ENCODE measurements at regions of chr1 and their contacts with region 1.

Region 1: DNA sequence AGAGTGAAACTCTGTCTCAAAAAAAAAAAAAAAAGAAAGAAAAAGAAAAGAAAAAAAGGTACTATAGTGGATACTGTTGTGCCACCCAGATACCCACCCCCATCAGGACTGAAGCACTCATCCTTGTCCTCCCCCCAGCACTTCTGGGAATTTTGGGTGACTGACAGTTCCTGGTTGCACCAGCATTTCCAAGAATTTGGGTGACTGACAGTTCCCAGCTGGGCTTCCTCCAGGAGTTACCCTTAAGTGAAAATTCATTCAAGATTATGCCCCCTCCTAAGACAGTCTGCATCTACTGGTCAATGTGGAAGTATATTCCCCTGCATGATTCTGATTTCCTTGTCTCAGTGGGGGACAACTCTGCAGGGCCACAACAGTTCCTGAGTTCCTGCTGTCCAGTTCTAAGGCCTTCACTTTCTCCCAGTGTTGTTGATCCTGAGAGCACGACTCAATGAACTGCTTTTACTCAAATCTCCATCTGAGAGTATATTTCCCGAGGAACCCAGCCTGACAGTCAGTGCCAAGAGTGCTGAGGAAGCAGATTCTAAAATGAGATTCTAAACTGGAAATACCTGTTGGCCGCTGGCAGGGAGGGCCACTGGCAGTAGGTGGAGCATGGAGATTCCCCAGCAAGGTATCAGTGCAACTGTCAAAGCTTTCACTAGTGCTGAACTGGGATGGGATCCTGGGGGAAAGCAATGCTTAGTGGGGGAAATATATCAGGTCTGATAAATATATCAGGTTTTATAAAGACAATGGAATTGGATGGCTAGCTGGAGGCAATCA is 18.5 kb downstream of the RIIAD1 start:
- DNase-seq: no peak
- ATAC-seq: no peak; the same call in 1 of the 2 replicates
- H3K4me3 ChIP-seq: no peak overlapping the region
- H3K27ac ChIP-seq: no peak overlapping the region
- H3K4me1 ChIP-seq: peaks cover 6 to 10% of the 10 kb centered on the region in 2 experiments; a peak in 2 of 4 replicates
- H3K27me3 ChIP-seq: no peaks in the 10 kb centered on the region
- CTCF ChIP-seq: no peak
- POLR2A ChIP-seq: no peak
- RAD21 ChIP-seq: peak; percentile 23; the same call in 1 of the 2 replicates

Region 2: DNA sequence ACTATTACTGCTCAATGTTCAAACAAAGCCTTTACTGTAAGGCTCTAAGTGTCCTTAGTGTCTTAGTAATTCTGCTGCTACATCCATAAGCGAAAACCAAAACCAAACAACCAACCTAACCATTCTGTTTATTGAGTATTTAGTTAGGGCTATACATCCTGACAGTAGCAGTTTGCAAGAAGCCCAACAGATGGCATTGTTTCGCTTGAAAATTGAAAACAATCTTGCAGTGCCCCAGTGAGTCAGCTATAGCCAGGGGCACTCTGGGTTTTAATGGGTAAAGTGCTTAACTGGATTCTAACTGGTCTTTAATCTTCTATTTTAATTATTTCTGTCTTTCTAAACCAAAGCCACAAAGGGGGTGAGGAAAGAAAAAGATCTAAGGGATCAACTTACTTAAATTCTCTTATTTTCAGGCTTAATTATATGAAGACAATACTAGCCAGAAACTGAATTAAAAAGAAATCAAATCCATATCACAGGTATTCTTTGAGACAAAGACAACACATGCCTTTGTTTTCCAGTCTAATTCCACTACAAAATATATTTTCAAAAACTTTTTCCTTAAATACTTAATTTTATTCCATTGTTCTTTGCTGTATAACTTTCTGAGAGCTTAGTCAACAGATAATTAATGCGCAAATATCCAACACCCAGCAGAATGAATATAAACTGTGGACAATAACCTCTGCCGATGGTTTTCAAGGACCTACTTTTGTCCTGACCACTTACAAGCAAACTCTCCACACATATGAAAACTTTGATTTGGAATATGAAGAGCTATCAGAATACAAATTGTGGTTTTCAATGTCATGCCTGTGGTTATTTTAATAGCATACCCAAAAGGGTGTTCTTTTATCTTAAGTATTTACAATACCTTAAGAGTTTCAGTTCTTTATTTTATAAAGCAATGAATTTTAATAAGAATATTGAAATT is 295.7 kb before region 1 on chr1:
- CTCF ChIA-PET with region 1: interaction called, 4 read pairs
- POLR2A ChIA-PET with region 1: no interaction called
- RAD21 ChIA-PET with region 1: interaction called in 1 of 2 experiments, 5 read pairs
- intact Hi-C with region 1: loop called (anchors 1 kb)
- DNase-seq: peak; percentile 76
- ATAC-seq: peak; percentile 99
- H3K4me3 ChIP-seq: no peak overlapping the region
- H3K27ac ChIP-seq: peak overlapping the region; percentile 16; the same call in 1 of the 2 replicates
- H3K4me1 ChIP-seq: peaks cover 11 to 13% of the 10 kb centered on the region in 2 experiments
- H3K27me3 ChIP-seq: no peaks in the 10 kb centered on the region
- CTCF ChIP-seq: peak; percentile 79 to 84 (median 83); a peak in 5 of 6 replicates
- POLR2A ChIP-seq: no peak
- RAD21 ChIP-seq: peak; percentile 89

Region 3: DNA sequence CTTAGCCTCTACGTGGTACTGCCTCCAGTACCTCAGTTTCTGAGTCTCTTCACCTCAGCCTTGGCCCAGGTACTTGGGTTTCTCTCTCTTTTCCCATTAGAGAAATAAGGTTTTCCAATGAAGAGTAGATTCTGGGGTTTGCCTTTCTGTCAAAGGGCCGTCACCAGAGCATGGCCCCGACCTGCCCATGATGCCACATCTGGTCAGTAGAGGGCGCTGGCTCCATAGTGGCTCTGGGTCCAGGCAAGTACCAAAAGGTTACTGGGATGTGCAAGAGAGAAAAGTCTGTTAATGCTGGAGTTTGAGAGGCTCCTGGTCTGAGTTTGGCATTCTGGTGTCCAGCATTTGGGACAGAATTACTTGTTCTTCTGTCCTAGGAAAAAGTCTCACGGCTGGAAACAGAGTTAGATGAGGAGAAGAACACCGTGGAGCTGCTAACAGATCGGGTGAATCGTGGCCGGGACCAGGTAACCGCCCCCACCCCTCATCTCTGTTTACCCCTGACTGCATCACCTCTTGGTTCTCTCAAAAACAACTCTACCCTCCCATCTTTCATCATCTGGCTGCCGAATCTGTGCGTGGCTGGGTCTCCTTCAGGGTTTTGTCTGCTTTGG is 205.0 kb before region 1 on chr1:
- CTCF ChIA-PET with region 1: interaction called, 6 read pairs
- POLR2A ChIA-PET with region 1: interaction called, 10 read pairs
- RAD21 ChIA-PET with region 1: no interaction called
- intact Hi-C with region 1: loop called (anchors 1 kb)
- DNase-seq: no peak
- ATAC-seq: peak; percentile 74
- H3K4me3 ChIP-seq: no peak overlapping the region
- H3K27ac ChIP-seq: no peak overlapping the region
- H3K4me1 ChIP-seq: peaks cover 8 to 20% of the 10 kb centered on the region in 2 experiments
- H3K27me3 ChIP-seq: no peaks in the 10 kb centered on the region
- CTCF ChIP-seq: peak; percentile 85 to 99 (median 98)
- POLR2A ChIP-seq: no peak
- RAD21 ChIP-seq: peak; percentile 93

Region 4: DNA sequence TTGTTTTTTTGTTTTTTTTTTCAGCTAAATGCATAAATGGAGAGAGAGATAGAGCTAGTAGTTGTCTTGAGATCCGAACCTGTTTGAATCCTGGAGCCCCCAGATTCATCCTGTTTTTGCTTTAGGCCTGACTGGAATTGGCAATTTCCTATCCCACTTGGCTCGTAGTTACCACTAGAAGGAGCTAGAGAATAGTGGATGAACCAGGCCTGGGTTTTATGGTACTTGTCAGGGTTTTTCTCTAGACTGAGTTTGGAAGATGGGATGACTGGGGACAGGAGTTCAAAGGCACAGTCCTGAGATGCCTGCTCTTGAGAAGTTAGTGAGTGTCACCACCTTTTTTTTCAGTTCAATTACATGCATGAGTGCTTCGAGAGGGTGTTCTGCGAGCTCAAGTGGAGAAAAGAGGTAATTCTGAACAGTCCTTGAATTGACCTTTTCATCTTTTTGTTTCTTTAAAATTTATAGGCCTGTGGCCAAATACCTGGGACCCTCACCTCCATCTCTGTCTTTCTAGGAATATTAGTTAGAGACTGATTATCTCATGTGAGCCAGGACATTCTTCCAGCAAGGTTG is 46.6 kb before region 1 on chr1:
- CTCF ChIA-PET with region 1: no interaction called
- POLR2A ChIA-PET with region 1: no interaction called
- RAD21 ChIA-PET with region 1: interaction called in 1 of 2 experiments, 5 read pairs
- intact Hi-C with region 1: loop called (anchors 1 kb)
- DNase-seq: peak; percentile 23
- ATAC-seq: peak; percentile 72
- H3K4me3 ChIP-seq: no peak overlapping the region
- H3K27ac ChIP-seq: no peak overlapping the region
- H3K4me1 ChIP-seq: no peaks in the 10 kb centered on the region
- H3K27me3 ChIP-seq: no peaks in the 10 kb centered on the region
- CTCF ChIP-seq: peak; percentile 64 to 74 (median 72); a peak in 5 of 6 replicates
- POLR2A ChIP-seq: no peak
- RAD21 ChIP-seq: peak; percentile 77

Region 5: GRCh38 chr1:151753160-151753559 is 13.4 kb after region 1 on chr1:
- CTCF ChIA-PET with region 1: no interaction called
- POLR2A ChIA-PET with region 1: no interaction called
- RAD21 ChIA-PET with region 1: no interaction called
- intact Hi-C with region 1: no loop called
- DNase-seq: no peak
- ATAC-seq: no peak
- H3K4me3 ChIP-seq: no peak overlapping the region
- H3K27ac ChIP-seq: no peak overlapping the region
- H3K4me1 ChIP-seq: no peaks in the 10 kb centered on the region; a peak in 1 of 4 replicates
- H3K27me3 ChIP-seq: no peaks in the 10 kb centered on the region
- CTCF ChIP-seq: no peak
- POLR2A ChIP-seq: no peak
- RAD21 ChIP-seq: no peak

Measured in HCT116 (cell line).